Keratinocyte (primary cell): ENCODE measurements at regions of chr17 and their contacts with region 1.

Region 1: GRCh38 chr17:34637548-34638525 is 58.5 kb downstream of the TMEM132E start:
- DNase-seq: peak; percentile 23
- H3K4me3 ChIP-seq: peak overlapping the region in 1 of 3 experiments; percentile 22
- H3K27ac ChIP-seq: no peak overlapping the region
- H3K4me1 ChIP-seq: no peaks in the 10 kb centered on the region
- H3K27me3 ChIP-seq: peaks cover 20% of the 10 kb centered on the region
- CTCF ChIP-seq: peak; percentile 81 to 96 (median 96)

Region 2: GRCh38 chr17:34443619-34444469 is 194.0 kb before region 1 on chr17:
- dilution Hi-C with region 1: loop called (anchors 25 kb)
- DNase-seq: no peak
- H3K4me3 ChIP-seq: no peak overlapping the region
- H3K27ac ChIP-seq: no peak overlapping the region
- H3K4me1 ChIP-seq: no peaks in the 10 kb centered on the region
- H3K27me3 ChIP-seq: no peaks in the 10 kb centered on the region
- CTCF ChIP-seq: peak in 2 of 3 experiments; percentile 47 to 56

Region 3: GRCh38 chr17:34465789-34466188 is 172.0 kb before region 1 on chr17:
- dilution Hi-C with region 1: no loop called
- DNase-seq: no peak
- H3K4me3 ChIP-seq: no peak overlapping the region
- H3K27ac ChIP-seq: no peak overlapping the region
- H3K4me1 ChIP-seq: no peaks in the 10 kb centered on the region
- H3K27me3 ChIP-seq: no peaks in the 10 kb centered on the region
- CTCF ChIP-seq: no peak

Region 4: GRCh38 chr17:34519282-34519681 is 118.6 kb before region 1 on chr17:
- dilution Hi-C with region 1: no loop called
- DNase-seq: no peak
- H3K4me3 ChIP-seq: no peak overlapping the region
- H3K27ac ChIP-seq: no peak overlapping the region
- H3K4me1 ChIP-seq: no peaks in the 10 kb centered on the region
- H3K27me3 ChIP-seq: no peaks in the 10 kb centered on the region
- CTCF ChIP-seq: peak; percentile 18 to 47 (median 43)

Region 5: GRCh38 chr17:34571428-34572130 is 66.3 kb before region 1 on chr17:
- dilution Hi-C with region 1: loop called (anchors 5 kb)
- DNase-seq: no peak
- H3K4me3 ChIP-seq: no peak overlapping the region
- H3K27ac ChIP-seq: no peak overlapping the region
- H3K4me1 ChIP-seq: no peaks in the 10 kb centered on the region
- H3K27me3 ChIP-seq: peaks cover 6% of the 10 kb centered on the region
- CTCF ChIP-seq: no peak

Region 6: DNA sequence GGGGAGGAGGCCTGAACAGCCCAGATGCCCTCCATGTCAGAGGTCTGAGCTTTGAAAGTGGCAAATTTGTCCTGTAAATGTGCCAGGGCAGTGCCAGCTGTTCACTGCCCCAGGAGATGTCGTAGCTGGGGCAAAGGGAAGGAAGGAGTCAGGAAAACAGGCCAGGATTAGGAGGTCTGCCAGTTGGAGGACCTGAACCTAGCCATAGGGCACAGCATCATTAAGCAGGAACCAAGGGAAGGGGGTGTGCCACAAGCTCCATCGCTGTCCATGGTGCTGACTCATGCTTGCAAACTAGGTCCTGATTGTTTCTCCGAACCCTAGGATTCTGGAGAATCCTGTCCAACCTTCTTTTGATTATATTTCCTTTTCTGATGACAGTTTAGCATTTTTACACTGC is 65.7 kb after region 1 on chr17:
- dilution Hi-C with region 1: no loop called
- DNase-seq: no peak
- H3K4me3 ChIP-seq: no peak overlapping the region
- H3K27ac ChIP-seq: no peak overlapping the region
- H3K4me1 ChIP-seq: no peaks in the 10 kb centered on the region
- H3K27me3 ChIP-seq: no peaks in the 10 kb centered on the region
- CTCF ChIP-seq: no peak